Motor neuron (in vitro differentiated cells): ENCODE measurements at regions of chr6 and their contacts with region 1.

Region 1: GRCh38 chr6:37051138-37052026 is 45.9 kb downstream of the FGD2 start:
- ATAC-seq: peak; percentile 46 to 92 (median 88)
- H3K4me3 ChIP-seq: peak overlapping the region in 2 of 5 donors; percentile 0 to 1
- H3K27ac ChIP-seq: peak overlapping the region; percentile 20 to 40
- H3K4me1 ChIP-seq: peaks cover 12 to 16% of the 10 kb centered on the region in 2 donors

Region 2: GRCh38 chr6:37169496-37170272 is 118.3 kb after region 1 on chr6 and contains the start of gene PIM1:
- in situ Hi-C with region 1: loop called in 8 of 9 experiments (anchors 10 to 25 kb)
- ATAC-seq: peak; percentile 45 to 84 (median 78)
- H3K4me3 ChIP-seq: peak within 1 kb of the TSS; percentile 56 to 93 (median 81)
- H3K27ac ChIP-seq: peak within 1 kb of the TSS; percentile 95
- H3K4me1 ChIP-seq: peaks cover 10 to 13% of the 10 kb centered on the region in 2 donors
- total RNA-seq, gene PIM1: 3.1 to 26.3 (median 17.9) TPM